Activated naive CD4-positive, alpha-beta T cell treated with anti-CD3 and anti-CD28 coated beads for 36 hours (primary cell): ENCODE measurements at regions of chr9 and their contacts with region 1.

Region 1: GRCh38 chr9:102101723-102102122 is 363.3 kb upstream of the GRIN3A start:
- DNase-seq: no peak
- H3K4me3 Mint-ChIP-seq: no peak overlapping the region
- H3K27ac Mint-ChIP-seq: no peak overlapping the region
- H3K4me1 Mint-ChIP-seq: no peaks in the 10 kb centered on the region
- H3K27me3 Mint-ChIP-seq: no peaks in the 10 kb centered on the region

Region 2: GRCh38 chr9:102035929-102036328 is 65.8 kb before region 1 on chr9:
- CTCF ChIA-PET with region 1: no interaction called
- intact Hi-C with region 1: loop called (anchors 10 kb)
- DNase-seq: no peak
- H3K4me3 Mint-ChIP-seq: no peak overlapping the region
- H3K27ac Mint-ChIP-seq: no peak overlapping the region
- H3K4me1 Mint-ChIP-seq: no peaks in the 10 kb centered on the region
- H3K27me3 Mint-ChIP-seq: no peaks in the 10 kb centered on the region